ENCODE measurements at regions of chr12 and their contacts with region 1.

Region 1: DNA sequence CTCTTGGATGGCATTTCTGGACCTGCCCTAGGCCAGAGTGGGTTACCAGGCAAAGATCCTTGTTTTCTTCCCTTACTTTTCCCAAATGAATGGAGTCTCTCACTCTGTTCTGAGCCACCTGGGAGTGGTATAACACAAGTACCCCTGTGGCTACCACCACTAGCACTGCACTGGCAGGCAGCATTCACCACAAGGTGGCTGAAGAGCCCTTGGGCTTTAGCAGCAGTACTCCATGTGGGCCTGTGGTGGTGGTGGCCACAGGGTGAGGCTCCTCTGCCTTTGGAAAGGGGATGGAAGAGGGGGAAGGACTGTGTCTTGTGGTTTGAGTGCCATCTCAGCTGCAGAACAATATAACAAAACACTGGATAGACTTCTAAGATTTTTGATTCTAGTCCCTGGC is 38.1 kb upstream of the LMNTD1 start:
- DNase-seq: peak; percentile 9
- ATAC-seq: no peak
- H3K4me3 Mint-ChIP-seq: no peak overlapping the region
- H3K27ac Mint-ChIP-seq: peak overlapping the region; percentile 90
- H3K4me1 Mint-ChIP-seq: peaks cover 46% of the 10 kb centered on the region
- H3K27me3 Mint-ChIP-seq: no peaks in the 10 kb centered on the region

Region 2: GRCh38 chr12:25935355-25936144 is 344.4 kb after region 1 on chr12:
- CTCF ChIA-PET with region 1: no interaction called
- POLR2A ChIA-PET with region 1: no interaction called
- intact Hi-C with region 1: no loop called
- DNase-seq: no peak
- ATAC-seq: no peak
- H3K4me3 Mint-ChIP-seq: no peak overlapping the region
- H3K27ac Mint-ChIP-seq: no peak overlapping the region
- H3K4me1 Mint-ChIP-seq: no peaks in the 10 kb centered on the region
- H3K27me3 Mint-ChIP-seq: peaks cover 2% of the 10 kb centered on the region

Region 3: DNA sequence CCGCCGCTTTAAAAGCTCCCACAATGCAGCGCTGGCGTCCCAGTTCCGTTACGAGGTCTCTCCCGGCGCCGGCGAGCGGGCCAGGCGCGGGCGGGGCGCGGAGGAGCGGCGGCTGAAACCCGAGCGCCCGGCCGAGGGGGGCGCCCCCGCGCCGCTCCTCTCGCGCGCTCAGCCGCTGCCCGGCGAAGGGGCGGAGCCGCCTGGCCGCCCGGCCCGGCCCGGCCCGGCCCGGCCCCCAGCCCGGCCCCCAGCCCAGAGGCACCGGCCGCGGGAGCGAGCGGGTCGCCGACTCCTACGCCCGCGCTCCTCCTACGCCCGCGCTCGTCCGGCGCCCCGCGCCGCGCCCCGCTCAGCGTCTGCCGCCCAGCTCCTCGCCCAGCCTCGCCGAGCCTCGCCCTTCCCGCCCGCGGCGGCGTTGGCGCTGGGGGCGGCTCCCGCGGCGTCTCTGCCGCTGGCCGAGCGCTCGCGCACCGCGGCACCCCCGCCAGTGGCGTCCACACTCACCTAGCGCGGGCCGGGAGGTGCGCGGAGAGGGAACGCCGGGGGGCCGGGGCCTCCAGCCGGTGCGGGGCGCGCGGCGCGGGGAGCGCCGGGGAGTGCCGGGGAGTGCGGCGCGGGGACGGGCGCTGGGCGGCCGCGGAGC is 367.4 kb after region 1 on chr12 and contains the start of gene RASSF8:
- CTCF ChIA-PET with region 1: interaction called, 3 read pairs
- POLR2A ChIA-PET with region 1: no interaction called
- intact Hi-C with region 1: loop called in 1 of 2 experiments (anchors 10 kb)
- DNase-seq: peak; percentile 49
- ATAC-seq: peak; percentile 72
- H3K4me3 Mint-ChIP-seq: peak within 1 kb of the TSS; percentile 71
- H3K27ac Mint-ChIP-seq: peak within 1 kb of the TSS; percentile 10
- H3K4me1 Mint-ChIP-seq: peaks cover 10% of the 10 kb centered on the region
- H3K27me3 Mint-ChIP-seq: peaks cover 40% of the 10 kb centered on the region
- total RNA-seq, gene RASSF8: 1.2 to 1.3 TPM